ENCODE measurements at regions of chr4 and their contacts with region 1.

Region 1: GRCh38 chr4:4248029-4248884 is at the start of gene TMEM128:
- DNase-seq: peak; percentile 65
- ATAC-seq: peak; percentile 97
- H3K4me3 ChIP-seq: peak within 1 kb of the TSS; percentile 97
- H3K27ac ChIP-seq: peak within 1 kb of the TSS; percentile 84
- H3K4me1 ChIP-seq: peaks cover 7% of the 10 kb centered on the region
- H3K27me3 ChIP-seq: no peaks in the 10 kb centered on the region
- CTCF ChIP-seq: 0 out of 6 replicates have a peak, but pooled peaks of 1 of the 3 experiments have one; percentile 8
- EP300 ChIP-seq: no peak
- POLR2A ChIP-seq: peak; percentile 98
- RAD21 ChIP-seq: no peak
- polyA plus RNA-seq, gene TMEM128: 9.3 to 18.2 TPM

Region 2: DNA sequence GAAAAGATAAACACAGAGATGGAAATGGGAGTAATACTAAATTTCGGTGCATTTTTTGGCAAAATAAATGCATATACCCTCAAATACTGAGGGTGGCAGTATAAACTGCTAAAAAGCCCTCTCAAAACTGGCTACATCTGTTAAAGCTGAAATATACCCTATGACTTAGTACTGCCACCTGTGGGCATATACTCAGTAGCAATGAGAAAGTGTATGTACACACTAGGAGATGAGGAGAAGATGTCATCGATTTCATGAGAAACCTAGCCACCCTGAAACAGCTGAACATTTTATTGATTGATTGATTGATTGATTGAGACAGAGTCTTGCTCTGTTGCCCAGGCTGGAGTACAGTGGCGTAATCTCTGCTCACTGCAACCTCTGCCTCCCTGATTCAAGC is 12.0 kb after region 1 on chr4:
- CTCF ChIA-PET with region 1: interaction called, 11 read pairs
- POLR2A ChIA-PET with region 1: interaction called, 3 read pairs
- RAD21 ChIA-PET with region 1: interaction called, 4 read pairs
- SMC1A ChIA-PET with region 1: interaction called, 8 read pairs
- in situ Hi-C with region 1: no loop called
- intact Hi-C with region 1: no loop called
- DNase-seq: no peak
- ATAC-seq: peak; percentile 95
- H3K4me3 ChIP-seq: no peak overlapping the region
- H3K27ac ChIP-seq: no peak overlapping the region
- H3K4me1 ChIP-seq: no peaks in the 10 kb centered on the region
- H3K27me3 ChIP-seq: no peaks in the 10 kb centered on the region
- CTCF ChIP-seq: peak; percentile 34 to 51 (median 47); a peak in 5 of 6 replicates
- EP300 ChIP-seq: no peak
- POLR2A ChIP-seq: no peak
- RAD21 ChIP-seq: peak; percentile 37

Region 3: DNA sequence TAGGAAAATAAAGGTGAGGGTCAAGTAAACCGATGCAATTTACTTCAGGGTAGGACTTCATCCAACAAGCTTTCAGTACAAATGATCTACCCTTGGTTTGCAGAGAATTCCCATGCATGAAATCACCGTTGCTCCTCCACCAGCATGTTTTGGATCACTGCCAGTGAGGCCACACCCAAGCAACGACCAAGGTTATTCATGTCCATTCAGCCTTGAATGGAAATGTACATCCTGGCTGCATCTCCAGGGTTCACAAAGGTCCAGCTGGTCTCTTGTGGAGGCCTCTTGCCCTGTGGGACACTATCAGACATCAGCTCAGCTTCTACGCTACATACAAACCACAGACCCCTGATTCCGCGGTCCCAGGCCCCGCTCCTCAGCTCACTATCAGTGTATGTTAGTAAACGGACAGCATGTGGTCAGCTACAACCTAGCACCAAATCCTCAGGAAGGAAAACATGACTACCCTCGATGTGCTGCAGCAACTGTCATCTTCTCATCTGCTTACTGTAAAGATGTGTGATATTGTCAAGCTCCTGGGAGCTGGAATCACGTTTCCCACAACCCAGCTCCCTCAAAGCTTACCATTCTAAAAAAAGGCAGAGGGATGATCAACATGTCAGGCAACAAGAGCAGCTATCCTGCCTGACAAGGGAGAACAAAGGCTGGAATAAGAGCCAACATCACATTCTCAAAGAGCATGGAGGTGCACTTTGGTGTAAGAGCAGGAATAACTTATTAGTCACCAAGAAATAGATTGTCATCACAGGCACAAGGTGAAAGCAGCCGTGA is 36.8 kb after region 1 on chr4:
- CTCF ChIA-PET with region 1: interaction called, 13 read pairs
- POLR2A ChIA-PET with region 1: no interaction called
- RAD21 ChIA-PET with region 1: no interaction called
- SMC1A ChIA-PET with region 1: interaction called, 3 read pairs
- in situ Hi-C with region 1: no loop called
- intact Hi-C with region 1: no loop called
- DNase-seq: no peak
- ATAC-seq: no peak
- H3K4me3 ChIP-seq: no peak overlapping the region
- H3K27ac ChIP-seq: no peak overlapping the region
- H3K4me1 ChIP-seq: peaks cover 3% of the 10 kb centered on the region
- H3K27me3 ChIP-seq: no peaks in the 10 kb centered on the region
- CTCF ChIP-seq: no peak
- EP300 ChIP-seq: no peak
- POLR2A ChIP-seq: no peak
- RAD21 ChIP-seq: no peak

Region 4: GRCh38 chr4:4334798-4335520 is 86.7 kb after region 1 on chr4:
- CTCF ChIA-PET with region 1: interaction called, 58 read pairs
- POLR2A ChIA-PET with region 1: interaction called, 4 read pairs
- RAD21 ChIA-PET with region 1: interaction called, 8 read pairs
- SMC1A ChIA-PET with region 1: interaction called, 5 read pairs
- in situ Hi-C with region 1: loop called (anchors 5 kb)
- intact Hi-C with region 1: loop called (anchors 1 kb)
- DNase-seq: no peak
- ATAC-seq: peak; percentile 97
- H3K4me3 ChIP-seq: no peak overlapping the region
- H3K27ac ChIP-seq: no peak overlapping the region
- H3K4me1 ChIP-seq: peaks cover 3% of the 10 kb centered on the region; the same call in 1 of the 2 replicates
- H3K27me3 ChIP-seq: no peaks in the 10 kb centered on the region
- CTCF ChIP-seq: peak; percentile 79 to 90 (median 88)
- EP300 ChIP-seq: no peak
- POLR2A ChIP-seq: no peak
- RAD21 ChIP-seq: peak; percentile 86

Region 5: GRCh38 chr4:4406455-4407298 is 158.4 kb after region 1 on chr4:
- CTCF ChIA-PET with region 1: no interaction called
- POLR2A ChIA-PET with region 1: no interaction called
- RAD21 ChIA-PET with region 1: no interaction called
- SMC1A ChIA-PET with region 1: no interaction called
- in situ Hi-C with region 1: no loop called
- intact Hi-C with region 1: no loop called
- DNase-seq: no peak
- ATAC-seq: no peak; the same call in 2 of the 3 replicates
- H3K4me3 ChIP-seq: no peak overlapping the region
- H3K27ac ChIP-seq: no peak overlapping the region
- H3K4me1 ChIP-seq: no peaks in the 10 kb centered on the region
- H3K27me3 ChIP-seq: no peaks in the 10 kb centered on the region
- CTCF ChIP-seq: no peak
- EP300 ChIP-seq: no peak
- POLR2A ChIP-seq: no peak
- RAD21 ChIP-seq: no peak

Region 6: GRCh38 chr4:4430492-4431197 is 182.4 kb after region 1 on chr4:
- CTCF ChIA-PET with region 1: interaction called, 11 read pairs
- POLR2A ChIA-PET with region 1: no interaction called
- RAD21 ChIA-PET with region 1: interaction called, 3 read pairs
- SMC1A ChIA-PET with region 1: interaction called, 3 read pairs
- in situ Hi-C with region 1: no loop called
- intact Hi-C with region 1: loop called (anchors 2 kb)
- DNase-seq: no peak
- ATAC-seq: peak; percentile 98
- H3K4me3 ChIP-seq: no peak overlapping the region
- H3K27ac ChIP-seq: no peak overlapping the region
- H3K4me1 ChIP-seq: no peaks in the 10 kb centered on the region
- H3K27me3 ChIP-seq: no peaks in the 10 kb centered on the region
- CTCF ChIP-seq: peak; percentile 62 to 71 (median 66); a peak in 5 of 6 replicates
- EP300 ChIP-seq: no peak
- POLR2A ChIP-seq: no peak
- RAD21 ChIP-seq: peak; percentile 29